ENCODE measurements at regions of chr9 and their contacts with region 1.

Region 1: GRCh38 chr9:1031951-1032601 is 18.1 kb upstream of the DMRT2 start:
- DNase-seq: no peak

Region 2: DNA sequence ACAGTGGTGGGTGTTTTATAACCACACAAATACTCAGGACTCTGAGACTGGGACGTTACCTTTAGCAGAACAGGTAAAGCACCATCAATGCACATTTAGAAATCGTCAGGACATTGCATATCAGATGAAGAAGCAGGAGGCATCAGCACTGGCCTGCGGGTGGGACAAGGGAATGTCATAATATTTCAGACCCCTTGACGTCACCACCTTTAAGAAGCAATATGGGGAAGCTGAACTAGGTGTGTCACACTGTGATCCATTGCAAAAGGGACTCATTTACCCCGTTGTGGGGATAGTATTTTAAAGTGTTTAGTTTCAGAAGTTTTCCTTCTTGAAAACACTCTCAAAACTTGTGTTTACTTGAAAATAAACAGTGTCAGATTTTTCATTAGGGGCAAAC is 165.9 kb before region 1 on chr9:
- intact Hi-C with region 1: no loop called
- DNase-seq: no peak

Region 3: DNA sequence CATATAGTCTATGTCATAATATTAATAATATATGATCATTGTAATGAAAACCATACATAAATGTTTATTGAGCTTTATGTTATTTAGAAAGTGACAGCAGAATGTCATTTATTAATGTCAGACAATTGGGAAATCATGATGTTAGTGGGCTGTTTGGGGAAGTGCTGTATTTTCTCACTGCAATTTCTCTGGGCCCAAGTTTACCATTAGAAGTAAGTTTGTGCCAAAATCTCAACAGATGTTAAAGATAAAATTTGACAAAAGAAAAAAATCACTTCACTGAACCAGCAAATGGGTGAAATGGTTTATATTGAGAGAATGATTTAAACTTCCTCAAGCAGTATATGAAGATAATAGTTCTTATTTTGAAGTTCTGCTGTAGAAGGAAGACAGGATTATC is 549.9 kb after region 1 on chr9:
- intact Hi-C with region 1: no loop called
- DNase-seq: no peak

Region 4: GRCh38 chr9:2686911-2687310 is 1654.8 kb after region 1 on chr9:
- intact Hi-C with region 1: loop called in 1 of 2 experiments (anchors 5 kb)
- DNase-seq: no peak

Measured in posterior vena cava (tissue), 2 donors.